ENCODE measurements at regions of chr2 and their contacts with region 1.

Region 1: DNA sequence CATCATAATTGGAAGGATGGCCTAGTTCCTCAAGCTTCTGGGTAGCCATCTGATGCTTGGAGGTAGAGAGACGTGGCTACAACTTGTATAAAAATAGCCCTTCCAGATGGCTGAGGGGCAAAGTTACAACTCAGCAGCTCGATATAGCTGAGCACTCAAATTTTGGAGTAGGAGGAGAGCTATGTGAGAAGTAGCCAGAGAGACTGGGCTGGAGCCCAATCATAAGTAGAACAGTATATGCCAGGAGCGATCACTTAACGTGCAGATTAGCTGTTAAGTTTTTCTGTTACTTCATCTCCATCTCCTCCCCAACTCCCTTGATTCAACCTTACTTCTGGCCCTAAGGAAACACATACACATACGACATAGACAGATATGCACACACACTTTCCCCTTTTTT is 28.8 kb downstream of the CNRIP1 start:
- DNase-seq: no peak
- ATAC-seq: no peak
- H3K4me3 ChIP-seq: no peak overlapping the region
- H3K27ac ChIP-seq: no peak overlapping the region
- H3K4me1 ChIP-seq: no peaks in the 10 kb centered on the region
- CTCF ChIP-seq: no peak
- EP300 ChIP-seq: no peak
- POLR2A ChIP-seq: no peak
- RAD21 ChIP-seq: no peak

Region 2: DNA sequence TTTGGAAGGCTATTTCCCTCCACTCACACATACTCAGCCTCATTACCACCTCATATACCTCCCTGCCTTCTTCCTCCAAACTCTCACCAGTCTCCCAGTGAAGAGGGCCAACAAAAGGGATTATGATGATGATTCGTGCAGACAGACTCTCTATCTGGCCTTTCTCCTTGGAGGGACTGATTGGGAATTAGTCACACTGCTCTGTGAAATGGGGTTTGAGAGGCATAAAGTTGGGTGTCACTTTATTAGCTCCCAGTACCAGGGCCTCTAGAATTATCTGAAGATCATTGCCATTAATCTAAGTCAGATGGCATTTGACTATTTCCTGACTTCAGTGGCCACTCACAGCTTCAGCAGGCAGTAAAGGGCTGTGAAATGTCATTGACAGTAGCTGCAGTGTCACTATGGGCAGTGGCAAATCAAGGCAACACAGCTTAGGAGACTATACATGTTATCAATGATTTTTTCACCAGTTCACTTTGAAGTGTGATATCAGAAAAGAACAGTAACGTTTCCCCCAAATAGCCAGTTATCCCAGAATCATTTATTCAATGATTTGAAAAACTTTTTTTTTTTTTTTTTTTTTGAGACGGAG is 11.5 kb after region 1 on chr2:
- CTCF ChIA-PET with region 1: interaction called, 16 read pairs
- POLR2A ChIA-PET with region 1: no interaction called
- DNase-seq: no peak
- ATAC-seq: peak; percentile 37 to 47; a peak in 4 of 6 replicates
- H3K4me3 ChIP-seq: no peak overlapping the region
- H3K27ac ChIP-seq: no peak overlapping the region
- H3K4me1 ChIP-seq: peaks cover 10% of the 10 kb centered on the region; the same call in 1 of the 3 replicates
- CTCF ChIP-seq: no peak
- EP300 ChIP-seq: no peak
- POLR2A ChIP-seq: no peak
- RAD21 ChIP-seq: no peak

Region 3: GRCh38 chr2:68387408-68388350 is 96.8 kb after region 1 on chr2:
- CTCF ChIA-PET with region 1: no interaction called
- POLR2A ChIA-PET with region 1: no interaction called
- DNase-seq: no peak
- ATAC-seq: no peak
- H3K4me3 ChIP-seq: no peak overlapping the region
- H3K27ac ChIP-seq: no peak overlapping the region
- H3K4me1 ChIP-seq: no peaks in the 10 kb centered on the region
- CTCF ChIP-seq: no peak
- EP300 ChIP-seq: no peak
- POLR2A ChIP-seq: no peak
- RAD21 ChIP-seq: no peak